Sigmoid colon (tissue), 7 donors: ENCODE measurements at regions of chr14 and their contacts with region 1.

Region 1: GRCh38 chr14:101997429-101998336 is 33.3 kb downstream of the DYNC1H1 start:
- DNase-seq: no peak
- H3K4me3 ChIP-seq: no peak overlapping the region
- H3K27ac ChIP-seq: no peak overlapping the region
- H3K4me1 ChIP-seq: no peaks in the 10 kb centered on the region
- H3K27me3 ChIP-seq: no peaks in the 10 kb centered on the region
- CTCF ChIP-seq: no peak
- EP300 ChIP-seq: no peak
- POLR2A ChIP-seq: no peak

Region 2: DNA sequence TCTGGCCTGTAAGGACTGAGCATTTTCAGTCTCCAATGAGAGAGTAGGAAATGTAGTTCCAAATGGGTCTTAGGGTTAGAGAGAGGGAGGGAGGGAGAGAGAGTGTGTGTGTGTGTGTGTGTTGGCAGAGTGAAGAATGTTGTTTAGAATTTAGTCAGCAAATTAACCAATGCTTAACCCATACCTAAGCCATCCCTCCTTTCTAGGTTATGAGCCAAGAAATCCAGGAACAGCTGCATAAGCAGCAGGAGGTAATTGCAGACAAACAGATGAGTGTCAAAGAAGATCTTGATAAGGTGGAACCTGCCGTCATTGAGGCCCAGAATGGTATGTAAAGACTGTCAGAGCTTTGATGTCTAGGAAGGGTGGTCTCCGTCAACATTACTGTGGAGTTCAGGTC is 32.3 kb after region 1 on chr14:
- intact Hi-C with region 1: loop called (anchors 5 kb)
- DNase-seq: no peak
- H3K4me3 ChIP-seq: no peak overlapping the region
- H3K27ac ChIP-seq: no peak overlapping the region
- H3K4me1 ChIP-seq: peaks cover 0 to 5% (median 0%) of the 10 kb centered on the region in 4 donors
- H3K27me3 ChIP-seq: no peaks in the 10 kb centered on the region
- CTCF ChIP-seq: no peak
- EP300 ChIP-seq: no peak
- POLR2A ChIP-seq: no peak